Posterior vena cava (tissue), 2 donors: ENCODE measurements at regions of chr9 and their contacts with region 1.

Region 1: DNA sequence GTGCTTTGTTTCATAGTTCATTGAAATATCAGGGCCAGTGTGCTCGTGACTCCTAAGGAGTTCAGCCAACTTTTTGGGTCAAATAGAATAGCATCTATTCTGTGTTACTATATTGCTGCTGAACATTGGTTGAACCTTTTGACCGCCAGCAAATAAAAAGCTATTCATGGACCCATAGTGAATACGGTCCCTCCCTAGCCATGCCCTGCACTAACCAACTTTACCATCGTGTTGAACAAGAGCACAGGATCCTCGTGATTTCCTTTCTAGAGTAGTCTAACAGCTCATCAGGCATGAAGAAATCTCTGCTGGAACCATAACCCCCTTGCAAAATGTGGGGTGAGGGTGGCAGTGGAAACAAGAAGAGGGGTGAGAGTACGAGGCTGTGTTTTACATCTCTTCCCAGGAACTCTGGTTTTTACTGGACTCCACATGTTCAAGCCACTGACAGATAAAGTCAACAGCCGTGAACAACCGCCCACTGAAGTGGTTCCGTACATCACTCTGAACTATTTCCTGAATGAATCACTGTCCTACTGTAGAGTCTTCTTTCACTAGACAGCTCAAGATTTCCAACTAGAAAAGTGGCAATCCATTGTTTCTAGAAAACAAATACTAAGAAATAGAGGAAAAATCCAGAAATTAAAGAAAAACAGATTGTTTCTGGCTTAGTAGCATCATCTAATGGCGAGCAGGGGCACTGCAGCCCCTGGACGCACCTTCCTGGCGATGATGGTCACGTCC is 70.1 kb upstream of the SPATA31E1 start:
- DNase-seq: peak; percentile 73

Region 2: GRCh38 chr9:87684627-87685219 is 127.8 kb before region 1 on chr9:
- intact Hi-C with region 1: loop called in 1 of 2 experiments (anchors 10 kb)
- DNase-seq: no peak

Region 3: GRCh38 chr9:88007206-88007631 is 194.7 kb after region 1 on chr9:
- intact Hi-C with region 1: no loop called
- DNase-seq: no peak